Caco-2 (cell line): ENCODE measurements at regions of chr6 and their contacts with region 1.

Region 1: DNA sequence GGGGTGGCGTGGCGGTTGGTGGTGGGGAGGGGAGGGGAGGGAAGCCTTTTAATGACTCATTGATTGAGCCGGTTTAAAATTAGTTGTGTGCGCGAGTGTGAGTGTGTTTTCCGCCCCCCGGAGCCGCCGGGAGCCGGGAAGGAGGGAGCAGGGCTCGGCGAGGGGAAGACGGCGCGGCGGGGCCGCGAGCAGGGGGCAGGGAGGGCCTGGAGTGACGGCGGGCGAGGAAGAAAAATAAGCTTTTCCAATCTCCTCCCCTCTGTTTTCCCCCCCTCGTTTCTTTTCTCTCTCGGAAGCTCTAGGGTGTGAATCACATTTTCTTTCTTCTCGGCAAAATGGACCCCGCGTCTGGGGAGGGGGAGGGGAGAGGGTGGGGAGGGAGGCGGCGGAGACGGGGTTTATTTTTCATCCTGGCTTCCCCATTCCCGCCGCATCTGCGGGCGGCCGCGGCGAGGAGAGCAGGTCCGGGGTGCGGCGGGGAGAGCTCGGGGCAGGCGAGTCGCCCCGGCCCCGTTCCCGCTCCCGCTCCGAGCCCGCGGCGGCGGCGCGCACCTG is 847 bp downstream of the BICRAL start:
- DNase-seq: peak; percentile 73 to 80
- H3K4me3 ChIP-seq: peak overlapping the region; percentile 88
- H3K4me3 Mint-ChIP-seq: peak overlapping the region; percentile 94
- H3K27ac Mint-ChIP-seq: peak overlapping the region; percentile 99
- H3K4me1 ChIP-seq: peaks cover 31% of the 10 kb centered on the region
- H3K4me1 Mint-ChIP-seq: no peaks in the 10 kb centered on the region
- H3K27me3 ChIP-seq: no peaks in the 10 kb centered on the region
- H3K27me3 Mint-ChIP-seq: no peaks in the 10 kb centered on the region
- CTCF ChIP-seq: no peak

Region 2: GRCh38 chr6:42762426-42762859 is 20.3 kb before region 1 on chr6:
- CTCF ChIA-PET with region 1: no interaction called
- POLR2A ChIA-PET with region 1: interaction called, 10 read pairs
- intact Hi-C with region 1: no loop called
- DNase-seq: peak in 1 of 2 experiments; percentile 16
- H3K4me3 ChIP-seq: no peak overlapping the region
- H3K4me3 Mint-ChIP-seq: no peak overlapping the region
- H3K27ac Mint-ChIP-seq: no peak overlapping the region
- H3K4me1 ChIP-seq: peaks cover 15% of the 10 kb centered on the region
- H3K4me1 Mint-ChIP-seq: peaks cover 6% of the 10 kb centered on the region
- H3K27me3 ChIP-seq: no peaks in the 10 kb centered on the region
- H3K27me3 Mint-ChIP-seq: no peaks in the 10 kb centered on the region
- CTCF ChIP-seq: no peak

Region 3: DNA sequence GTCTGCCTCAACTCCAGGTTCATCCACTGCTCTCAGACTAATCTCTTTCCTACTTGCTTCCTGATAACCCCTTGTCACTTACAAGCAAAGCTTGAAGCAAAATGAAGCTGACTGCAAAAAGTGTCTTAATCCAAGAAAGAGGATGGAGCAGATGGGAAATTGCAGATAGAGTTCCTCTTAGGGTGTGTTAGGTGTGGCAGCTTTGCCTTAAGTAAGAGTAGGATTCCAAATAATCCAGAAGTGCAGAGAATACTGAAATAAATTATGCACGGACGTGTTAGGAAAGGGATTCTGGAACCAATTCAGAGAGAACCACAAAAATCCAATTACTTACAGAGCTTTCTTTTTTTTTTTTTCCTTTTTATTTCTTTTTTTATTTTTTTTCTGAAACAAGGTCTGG is 90.6 kb after region 1 on chr6:
- CTCF ChIA-PET with region 1: no interaction called
- POLR2A ChIA-PET with region 1: no interaction called
- intact Hi-C with region 1: no loop called
- DNase-seq: no peak
- H3K4me3 ChIP-seq: no peak overlapping the region
- H3K4me3 Mint-ChIP-seq: no peak overlapping the region
- H3K27ac Mint-ChIP-seq: no peak overlapping the region
- H3K4me1 ChIP-seq: no peaks in the 10 kb centered on the region
- H3K4me1 Mint-ChIP-seq: no peaks in the 10 kb centered on the region
- H3K27me3 ChIP-seq: no peaks in the 10 kb centered on the region
- H3K27me3 Mint-ChIP-seq: no peaks in the 10 kb centered on the region
- CTCF ChIP-seq: no peak

Region 4: DNA sequence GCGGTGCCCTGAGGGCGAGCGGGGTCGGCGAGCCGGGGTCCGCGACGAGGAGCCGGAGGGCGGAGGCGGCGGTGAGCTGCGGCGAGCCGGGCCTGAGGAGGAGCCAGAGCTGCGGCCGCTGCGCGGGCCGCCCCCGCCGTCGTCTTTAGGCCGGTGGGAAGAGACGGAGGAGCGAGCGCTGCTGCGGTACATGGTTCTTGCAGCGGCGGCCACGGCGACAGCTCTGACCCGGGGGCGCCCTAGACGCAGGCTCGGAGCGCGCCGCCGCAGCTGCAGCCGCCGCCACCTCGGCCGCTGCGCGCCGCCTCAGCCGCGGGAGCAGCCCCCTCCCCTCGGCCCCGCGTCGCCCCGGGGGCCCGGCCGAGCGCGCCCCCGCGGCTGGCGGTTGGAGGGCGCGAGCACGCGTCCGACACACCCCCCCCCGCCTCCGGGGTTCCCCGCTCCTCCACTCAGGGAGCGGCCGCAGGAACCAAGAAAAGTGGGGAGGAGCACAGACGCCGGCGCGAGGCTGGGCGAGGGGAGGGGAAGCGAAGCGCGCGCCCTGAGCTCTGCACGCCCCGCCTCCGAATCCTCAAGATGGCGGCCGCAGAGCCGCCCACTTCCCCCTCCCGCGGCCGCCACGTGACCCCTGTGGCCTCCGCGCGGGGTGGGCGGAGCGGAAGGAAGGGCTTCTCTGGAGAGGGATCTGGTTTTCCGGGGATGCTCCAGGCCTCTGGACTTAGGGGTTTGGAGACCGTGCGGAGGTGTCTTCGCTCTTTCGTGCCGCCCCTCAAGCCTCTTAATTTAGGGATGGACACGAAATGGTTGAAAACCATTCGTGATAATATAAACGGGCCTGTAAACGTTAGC is 586.7 kb after region 1 on chr6 and contains the start of gene ZNF318:
- CTCF ChIA-PET with region 1: no interaction called
- POLR2A ChIA-PET with region 1: interaction called, 10 read pairs
- intact Hi-C with region 1: no loop called
- DNase-seq: peak; percentile 95 to 96
- H3K4me3 ChIP-seq: peak within 1 kb of the TSS; percentile 68
- H3K4me3 Mint-ChIP-seq: peak within 1 kb of the TSS; percentile 76
- H3K27ac Mint-ChIP-seq: peak within 1 kb of the TSS; percentile 67
- H3K4me1 ChIP-seq: peaks cover 13% of the 10 kb centered on the region
- H3K4me1 Mint-ChIP-seq: peaks cover 7% of the 10 kb centered on the region
- H3K27me3 ChIP-seq: no peaks in the 10 kb centered on the region
- H3K27me3 Mint-ChIP-seq: no peaks in the 10 kb centered on the region
- CTCF ChIP-seq: no peak
- total RNA-seq, gene ZNF318: 11.2 and 11.7 TPM in 2 replicates